Posterior vena cava (tissue), 2 donors: ENCODE measurements at regions of chr16 and their contacts with region 1.

Region 1: GRCh38 chr16:58028586-58029070 is 3.1 kb downstream of the MMP15 start:
- DNase-seq: no peak

Region 2: DNA sequence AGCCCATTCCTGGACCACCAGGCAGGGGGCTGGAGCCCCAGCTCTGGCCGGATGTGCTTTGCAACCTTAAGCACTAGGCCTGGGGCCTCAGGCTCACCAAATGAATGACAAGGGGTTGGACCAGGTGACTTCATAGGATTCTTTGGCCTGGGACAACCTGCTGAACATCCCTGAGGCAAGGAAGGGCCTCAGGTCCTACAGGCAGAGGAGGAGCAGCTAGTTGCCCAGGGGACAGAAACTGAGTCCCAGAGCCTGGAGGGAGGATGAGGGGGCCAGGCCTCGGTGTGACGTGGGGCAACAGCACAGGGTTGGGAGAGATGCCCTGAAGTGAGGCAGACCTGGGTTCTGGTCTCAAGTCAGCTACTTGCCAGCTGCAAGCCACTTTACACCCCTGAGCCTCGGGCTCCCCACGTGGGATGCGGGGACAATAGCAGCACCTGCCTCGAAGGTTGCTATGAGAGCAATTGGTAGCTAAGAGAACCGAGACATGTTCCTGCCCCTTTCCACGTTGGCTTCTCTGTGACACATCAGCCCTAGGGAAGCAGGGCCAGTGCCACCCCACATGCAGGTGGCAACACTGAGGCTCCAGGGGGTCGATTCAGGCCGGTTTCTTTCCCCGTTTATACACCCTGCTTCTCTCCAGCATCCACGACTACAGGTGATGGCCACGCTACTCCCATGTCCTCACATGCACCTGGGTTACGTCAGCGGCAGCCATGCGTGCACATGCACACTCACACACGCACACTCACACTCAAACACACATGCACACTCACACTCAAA is 58.0 kb after region 1 on chr16:
- intact Hi-C with region 1: no loop called
- DNase-seq: peak; percentile 60

Region 3: GRCh38 chr16:58118801-58119508 is 90.3 kb after region 1 on chr16:
- intact Hi-C with region 1: loop called in 1 of 2 experiments (anchors 1 kb)
- DNase-seq: no peak